ENCODE measurements at regions of chr4 and their contacts with region 1.

Region 1: GRCh38 chr4:11842620-11843263 is 414.0 kb upstream of the HS3ST1 start:
- DNase-seq: no peak
- ATAC-seq: no peak
- H3K4me3 ChIP-seq: no peak overlapping the region
- H3K27ac ChIP-seq: no peak overlapping the region
- H3K4me1 ChIP-seq: no peaks in the 10 kb centered on the region
- H3K27me3 ChIP-seq: no peaks in the 10 kb centered on the region
- CTCF ChIP-seq: no peak
- EP300 ChIP-seq: no peak
- POLR2A ChIP-seq: no peak
- RAD21 ChIP-seq: no peak

Region 2: DNA sequence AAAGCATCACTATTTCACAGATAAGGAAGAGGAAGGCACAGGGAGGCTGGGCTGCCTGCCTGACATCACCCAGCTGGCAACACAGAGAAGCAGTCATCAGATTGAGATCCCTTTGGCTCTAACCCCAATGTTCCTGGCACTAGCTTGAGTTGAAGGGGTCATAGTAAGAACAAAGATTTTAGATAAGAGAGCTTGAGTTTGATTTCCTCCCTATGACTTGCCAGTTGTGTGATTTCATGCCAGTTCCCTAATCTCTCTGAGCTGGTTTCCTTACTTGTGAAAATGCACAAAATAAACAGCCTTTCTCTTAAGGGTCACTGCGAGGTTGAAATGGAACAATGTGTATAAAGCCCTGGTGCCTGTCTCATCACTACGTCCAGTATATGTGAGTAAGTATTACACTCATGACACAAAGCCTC is 61.4 kb after region 1 on chr4:
- CTCF ChIA-PET with region 1: no interaction called
- POLR2A ChIA-PET with region 1: no interaction called
- RAD21 ChIA-PET with region 1: no interaction called
- SMC1A ChIA-PET with region 1: no interaction called
- in situ Hi-C with region 1: loop called (anchors 10 kb)
- intact Hi-C with region 1: no loop called
- DNase-seq: no peak
- ATAC-seq: no peak
- H3K4me3 ChIP-seq: no peak overlapping the region
- H3K27ac ChIP-seq: no peak overlapping the region
- H3K4me1 ChIP-seq: no peaks in the 10 kb centered on the region
- H3K27me3 ChIP-seq: no peaks in the 10 kb centered on the region
- CTCF ChIP-seq: no peak
- EP300 ChIP-seq: no peak
- POLR2A ChIP-seq: no peak
- RAD21 ChIP-seq: no peak